ENCODE measurements at regions of chr3 and their contacts with region 1.

Region 1: DNA sequence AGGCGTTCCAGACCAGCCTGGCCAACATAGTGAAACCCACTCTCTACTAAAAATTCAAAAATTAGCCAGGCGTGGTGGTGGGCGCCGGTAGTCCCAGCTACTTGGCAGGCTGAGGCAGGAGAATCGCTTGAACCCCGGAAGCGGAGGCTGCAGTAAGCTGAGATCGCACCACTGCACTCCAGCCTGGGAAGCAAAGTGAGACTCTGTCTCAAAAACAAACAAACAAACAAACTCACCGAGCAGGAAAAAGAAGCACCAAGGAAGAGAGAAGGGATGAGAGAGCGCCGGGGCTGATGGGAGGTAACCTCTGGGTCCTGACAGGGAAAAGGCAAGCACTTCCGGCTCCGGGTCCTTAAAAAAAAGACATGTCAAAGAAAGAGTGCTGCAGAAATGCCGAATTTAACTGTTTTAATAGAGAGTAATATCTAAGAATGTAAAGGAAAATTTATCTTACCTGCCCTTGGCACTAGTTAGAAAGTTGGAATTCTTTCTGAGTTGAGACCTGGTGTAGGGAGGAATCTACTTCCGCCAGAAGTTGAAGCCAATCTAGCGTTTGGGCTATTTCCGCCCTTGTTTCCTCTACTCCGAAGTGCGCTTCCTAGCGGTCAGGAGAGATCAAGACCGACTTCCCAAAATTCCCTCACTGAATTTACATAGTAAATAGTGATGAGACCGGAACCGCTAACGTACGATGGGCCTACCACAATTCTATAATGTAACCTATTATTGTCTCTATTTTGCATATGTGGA is 29.1 kb downstream of the EFCAB12 start:
- DNase-seq: peak; percentile 88 to 90
- H3K4me3 ChIP-seq: peak overlapping the region; percentile 96
- H3K4me3 Mint-ChIP-seq: peak overlapping the region; percentile 86
- H3K27ac Mint-ChIP-seq: peak overlapping the region; percentile 97
- H3K4me1 ChIP-seq: 0 out of 2 replicates have a peak, but pooled peaks cover 4% of the 10 kb centered on the region
- H3K4me1 Mint-ChIP-seq: peaks cover 5% of the 10 kb centered on the region
- H3K27me3 ChIP-seq: no peaks in the 10 kb centered on the region
- H3K27me3 Mint-ChIP-seq: no peaks in the 10 kb centered on the region
- CTCF ChIP-seq: peak; percentile 57 to 81

Region 2: GRCh38 chr3:129439817-129440617 is 40.7 kb after region 1 on chr3 and contains the starts of genes IFT122 and MBD4:
- CTCF ChIA-PET with region 1: no interaction called
- POLR2A ChIA-PET with region 1: interaction called, 10 read pairs
- intact Hi-C with region 1: loop called (anchors 1 kb)
- DNase-seq: peak; percentile 98 to 99
- H3K4me3 ChIP-seq: peak within 1 kb of the TSS; percentile 89
- H3K4me3 Mint-ChIP-seq: peak within 1 kb of the TSS; percentile 90
- H3K27ac Mint-ChIP-seq: peak within 1 kb of the TSS; percentile 96
- H3K4me1 ChIP-seq: peaks cover 20% of the 10 kb centered on the region
- H3K4me1 Mint-ChIP-seq: peaks cover 33% of the 10 kb centered on the region
- H3K27me3 ChIP-seq: no peaks in the 10 kb centered on the region
- H3K27me3 Mint-ChIP-seq: no peaks in the 10 kb centered on the region
- CTCF ChIP-seq: no peak
- total RNA-seq, gene IFT122: 21.9 and 30.0 TPM in 2 replicates
- total RNA-seq, gene MBD4: 33.5 and 39.8 TPM in 2 replicates